ENCODE measurements at regions of chr3 and their contacts with region 1.

Region 1: DNA sequence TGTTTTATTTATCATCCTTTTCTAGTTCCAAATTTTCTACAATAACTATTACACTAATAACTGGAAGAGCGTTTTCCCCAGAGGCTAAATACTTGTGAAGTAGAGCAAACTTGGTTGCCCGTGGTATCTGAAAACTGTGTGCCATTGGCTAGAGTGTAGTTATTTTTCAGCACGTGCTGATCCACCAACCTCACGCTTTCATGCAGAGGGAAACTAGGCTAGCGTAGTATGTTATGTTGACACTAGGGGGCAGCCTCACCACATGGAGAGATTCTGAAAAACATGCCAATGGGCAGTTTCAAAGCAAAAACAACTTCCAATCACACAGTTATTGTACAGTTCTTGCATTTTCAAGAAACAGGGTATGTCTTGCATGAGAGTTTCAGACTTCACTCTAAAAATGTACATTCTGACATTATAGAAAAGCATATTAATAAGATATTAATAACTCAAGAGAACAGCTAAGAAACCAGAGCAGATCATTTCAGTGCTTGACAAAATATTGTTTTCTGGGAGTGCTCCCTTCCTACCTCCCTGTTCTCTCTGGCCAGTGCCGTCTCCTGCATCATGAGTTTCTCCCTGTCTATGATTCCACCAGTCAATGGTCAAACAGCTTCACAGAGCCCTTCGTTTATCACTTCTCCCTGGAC is 39.7 kb downstream of the SPATA12 start:
- DNase-seq: peak; percentile 75
- ATAC-seq: peak; percentile 58
- H3K4me3 Mint-ChIP-seq: no peak overlapping the region
- H3K27ac Mint-ChIP-seq: no peak overlapping the region
- H3K4me1 Mint-ChIP-seq: no peaks in the 10 kb centered on the region
- H3K27me3 Mint-ChIP-seq: peaks cover 16% of the 10 kb centered on the region

Region 2: GRCh38 chr3:57087361-57088092 is 12.6 kb before region 1 on chr3:
- CTCF ChIA-PET with region 1: interaction called, 10 read pairs
- DNase-seq: no peak
- ATAC-seq: no peak
- H3K4me3 Mint-ChIP-seq: no peak overlapping the region
- H3K27ac Mint-ChIP-seq: no peak overlapping the region
- H3K4me1 Mint-ChIP-seq: no peaks in the 10 kb centered on the region
- H3K27me3 Mint-ChIP-seq: peaks cover 32% of the 10 kb centered on the region

Region 3: GRCh38 chr3:57112206-57112605 is 12.0 kb after region 1 on chr3:
- CTCF ChIA-PET with region 1: interaction called, 18 read pairs
- DNase-seq: no peak
- ATAC-seq: no peak
- H3K4me3 Mint-ChIP-seq: no peak overlapping the region
- H3K27ac Mint-ChIP-seq: no peak overlapping the region
- H3K4me1 Mint-ChIP-seq: peaks cover 5% of the 10 kb centered on the region
- H3K27me3 Mint-ChIP-seq: peaks cover 33% of the 10 kb centered on the region